ENCODE measurements at regions of chr10 and their contacts with region 1.

Region 1: GRCh38 chr10:103859161-103860086 is 4.0 kb upstream of the SH3PXD2A start:
- DNase-seq: peak in 1 of 2 donors; percentile 73
- ATAC-seq: peak; percentile 41 to 81 (median 64)
- H3K4me3 ChIP-seq: no peak overlapping the region
- H3K27ac ChIP-seq: peak overlapping the region in 1 of 10 donors; percentile 42
- H3K4me1 ChIP-seq: peaks cover 0 to 29% (median 11%) of the 10 kb centered on the region in 9 donors
- H3K27me3 ChIP-seq: peaks cover 0 to 17% (median 0%) of the 10 kb centered on the region in 7 donors
- CTCF ChIP-seq: peak; percentile 57 to 85 (median 79)

Region 2: DNA sequence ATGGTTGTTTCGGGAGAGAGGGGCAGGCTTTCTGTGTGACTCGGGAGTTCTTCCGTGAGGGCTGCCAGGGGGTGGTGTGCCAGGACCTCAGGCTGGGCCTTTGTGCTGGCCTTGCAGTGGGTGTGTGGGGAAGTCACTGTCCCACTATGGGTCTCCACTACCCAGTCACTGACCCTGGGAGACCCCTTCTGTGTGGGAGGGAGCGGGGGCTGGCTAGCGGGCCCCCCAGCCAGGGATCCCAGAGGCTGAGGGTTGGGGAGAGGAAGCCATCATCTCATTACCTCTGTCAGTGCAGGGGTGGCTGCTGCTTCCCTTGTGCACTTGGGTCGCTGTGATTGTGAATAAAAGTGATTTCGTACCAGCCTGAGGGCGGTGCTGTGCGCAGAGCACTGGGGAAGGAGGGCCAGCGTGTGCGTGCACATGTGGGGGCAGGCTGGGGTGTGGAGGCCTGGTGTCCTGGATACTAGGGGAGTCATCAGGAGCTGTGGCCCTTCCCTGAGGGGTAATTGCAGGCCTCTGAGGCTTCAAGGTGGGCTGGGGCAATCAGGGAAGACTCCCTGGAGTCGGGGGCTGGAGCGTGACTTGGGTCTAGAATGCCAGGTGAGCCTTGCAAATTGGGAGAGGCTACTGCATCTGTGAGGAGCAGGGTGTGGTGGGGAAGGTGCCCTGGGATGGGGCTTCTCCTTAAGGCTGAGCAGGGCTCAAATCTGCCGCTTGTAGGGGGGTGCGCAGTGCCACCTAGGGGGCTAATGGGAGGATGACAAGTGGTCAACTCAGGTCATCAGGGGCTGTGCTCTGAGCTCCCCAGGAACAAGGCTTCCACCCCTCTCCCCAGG is 267.0 kb before region 1 on chr10:
- intact Hi-C with region 1: loop called in 2 of 10 experiments (anchors 5 to 10 kb)
- DNase-seq: no peak
- ATAC-seq: peak in 7 of 8 donors; percentile 11 to 49 (median 43)
- H3K4me3 ChIP-seq: no peak overlapping the region
- H3K27ac ChIP-seq: no peak overlapping the region
- H3K4me1 ChIP-seq: peaks cover 0 to 14% (median 6%) of the 10 kb centered on the region in 9 donors
- H3K27me3 ChIP-seq: no peaks in the 10 kb centered on the region
- CTCF ChIP-seq: peak; percentile 23 to 70 (median 57)

Region 3: DNA sequence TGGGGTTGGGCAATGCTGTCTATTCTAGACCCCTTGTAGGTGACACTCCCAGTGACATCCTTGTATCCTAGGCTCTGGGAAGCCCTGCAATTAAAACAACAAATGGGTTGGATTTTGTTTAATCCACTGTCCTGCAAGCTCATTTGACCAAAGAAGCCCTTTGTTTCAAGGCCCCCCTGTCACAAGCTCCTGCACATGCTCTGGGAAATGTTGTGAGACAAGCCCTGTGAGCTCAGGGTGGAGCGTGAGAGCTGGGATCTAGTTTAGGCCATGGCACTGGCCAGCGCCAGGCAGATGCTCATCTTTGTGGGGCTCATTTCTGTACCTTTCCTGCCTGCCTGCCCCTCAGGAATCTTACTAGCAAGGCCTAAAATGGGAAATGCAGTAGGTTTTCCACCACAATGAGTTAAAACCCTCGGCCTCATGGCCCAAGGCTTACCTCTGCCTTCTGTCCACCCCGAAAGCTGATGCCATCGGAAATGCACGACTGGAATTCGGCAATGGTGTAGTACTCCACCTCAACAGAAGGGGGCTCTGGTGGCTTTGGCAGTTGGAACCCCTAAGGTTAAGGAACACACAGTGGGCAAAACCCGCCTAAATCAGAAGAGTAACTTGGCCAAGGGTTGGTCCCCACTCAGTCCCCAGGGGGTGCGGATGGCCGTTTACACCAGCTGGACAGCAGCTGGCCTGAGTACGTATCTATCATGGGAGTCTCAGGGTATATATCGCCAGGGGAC is 253.9 kb before region 1 on chr10:
- intact Hi-C with region 1: loop called in 6 of 10 experiments (anchors 5 to 10 kb)
- DNase-seq: peak in 1 of 2 donors; percentile 66
- ATAC-seq: peak; percentile 27 to 63 (median 50)
- H3K4me3 ChIP-seq: no peak overlapping the region
- H3K27ac ChIP-seq: no peak overlapping the region
- H3K4me1 ChIP-seq: peaks cover 0 to 16% (median 0%) of the 10 kb centered on the region in 9 donors
- H3K27me3 ChIP-seq: no peaks in the 10 kb centered on the region
- CTCF ChIP-seq: peak; percentile 75 to 84 (median 81)

Region 4: GRCh38 chr10:103712570-103713498 is 146.6 kb before region 1 on chr10:
- intact Hi-C with region 1: loop called (anchors 1 to 2 kb)
- DNase-seq: peak; percentile 74 to 84
- ATAC-seq: peak; percentile 62 to 87 (median 80)
- H3K4me3 ChIP-seq: no peak overlapping the region
- H3K27ac ChIP-seq: no peak overlapping the region
- H3K4me1 ChIP-seq: peaks cover 0 to 25% (median 9%) of the 10 kb centered on the region in 9 donors
- H3K27me3 ChIP-seq: no peaks in the 10 kb centered on the region
- CTCF ChIP-seq: peak; percentile 80 to 96 (median 90)

Region 5: DNA sequence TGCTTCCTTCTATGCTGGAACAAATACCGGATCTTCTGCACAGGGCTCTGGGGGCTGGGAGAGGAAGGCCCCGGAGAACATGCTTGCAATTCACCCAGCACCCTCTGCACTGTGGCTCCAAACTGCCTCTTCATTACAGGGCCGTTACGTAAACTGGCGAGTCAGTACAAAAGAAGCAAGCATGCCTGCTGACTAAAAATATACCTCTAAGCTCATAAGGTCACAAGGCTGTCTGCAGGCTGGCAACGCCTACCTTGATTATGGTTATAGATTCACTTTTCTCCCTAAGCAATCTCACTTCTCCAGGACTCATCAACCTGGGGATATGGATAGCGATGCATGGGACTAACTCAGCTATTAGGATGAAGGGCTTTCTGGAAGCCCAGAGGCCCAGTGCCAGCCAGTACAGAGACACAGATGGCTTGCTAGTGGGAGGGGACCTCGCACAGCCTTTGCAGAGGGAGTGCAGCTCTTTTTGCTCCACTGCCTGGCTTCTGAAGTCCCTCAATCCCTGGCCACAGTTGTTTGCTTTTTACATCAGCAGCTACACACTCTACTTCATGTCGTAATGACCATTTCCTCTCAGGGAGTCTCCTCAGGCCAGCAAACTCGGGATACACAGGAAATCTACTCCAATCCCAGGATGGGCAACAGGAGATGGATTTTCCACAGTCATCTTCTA is 100.2 kb before region 1 on chr10:
- intact Hi-C with region 1: no loop called
- DNase-seq: peak in 1 of 2 donors; percentile 85
- ATAC-seq: peak; percentile 75 to 93 (median 87)
- H3K4me3 ChIP-seq: peak overlapping the region in 1 of 10 donors; percentile 20
- H3K27ac ChIP-seq: peak overlapping the region; percentile 77 to 96 (median 94)
- H3K4me1 ChIP-seq: peaks cover 30 to 86% (median 76%) of the 10 kb centered on the region in 9 donors
- H3K27me3 ChIP-seq: no peaks in the 10 kb centered on the region
- CTCF ChIP-seq: peak in 1 of 9 donors; percentile 10

Region 6: DNA sequence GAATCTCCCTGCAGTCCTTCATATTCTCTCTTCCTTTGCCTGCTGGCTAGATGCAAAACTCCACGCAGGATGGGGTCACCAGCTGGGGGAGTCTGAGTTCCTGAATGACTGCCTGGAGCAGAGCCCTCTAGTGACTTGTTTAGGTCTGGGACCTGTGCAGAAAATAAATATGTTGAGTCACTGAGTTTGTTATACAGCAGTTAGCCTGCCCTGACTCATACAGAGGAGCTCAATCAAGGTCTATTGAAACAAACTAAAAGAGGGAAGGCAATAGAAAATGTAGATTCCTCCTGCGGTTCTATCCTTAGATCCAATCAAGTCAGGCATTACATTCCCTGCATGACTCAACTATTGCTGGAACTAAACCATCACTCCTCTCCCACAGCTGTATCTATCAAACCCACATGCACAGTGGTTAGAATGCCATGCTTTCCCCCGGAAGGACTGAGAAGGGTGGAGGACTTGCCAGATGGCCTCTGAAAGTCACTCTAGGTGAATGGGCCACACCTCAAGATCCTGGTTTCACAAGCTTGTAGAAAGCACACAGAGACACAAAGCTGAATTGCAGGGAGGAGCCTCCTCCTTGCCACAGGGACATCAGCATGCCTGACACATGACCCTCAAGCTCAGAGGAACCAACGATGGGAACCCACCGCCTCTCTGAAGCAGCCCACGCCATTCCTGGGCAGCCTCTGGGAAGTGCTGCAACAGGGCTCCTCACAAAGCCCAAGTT is 77.9 kb before region 1 on chr10:
- intact Hi-C with region 1: loop called in 3 of 10 experiments (anchors 5 to 10 kb)
- DNase-seq: no peak
- ATAC-seq: no peak
- H3K4me3 ChIP-seq: no peak overlapping the region
- H3K27ac ChIP-seq: no peak overlapping the region
- H3K4me1 ChIP-seq: peaks cover 14 to 66% (median 47%) of the 10 kb centered on the region in 9 donors
- H3K27me3 ChIP-seq: no peaks in the 10 kb centered on the region
- CTCF ChIP-seq: peak in 5 of 9 donors; percentile 11 to 41 (median 23)

Measured in heart right ventricle (tissue), 16 donors.